ENCODE measurements at regions of chr2 and their contacts with region 1.

Region 1: DNA sequence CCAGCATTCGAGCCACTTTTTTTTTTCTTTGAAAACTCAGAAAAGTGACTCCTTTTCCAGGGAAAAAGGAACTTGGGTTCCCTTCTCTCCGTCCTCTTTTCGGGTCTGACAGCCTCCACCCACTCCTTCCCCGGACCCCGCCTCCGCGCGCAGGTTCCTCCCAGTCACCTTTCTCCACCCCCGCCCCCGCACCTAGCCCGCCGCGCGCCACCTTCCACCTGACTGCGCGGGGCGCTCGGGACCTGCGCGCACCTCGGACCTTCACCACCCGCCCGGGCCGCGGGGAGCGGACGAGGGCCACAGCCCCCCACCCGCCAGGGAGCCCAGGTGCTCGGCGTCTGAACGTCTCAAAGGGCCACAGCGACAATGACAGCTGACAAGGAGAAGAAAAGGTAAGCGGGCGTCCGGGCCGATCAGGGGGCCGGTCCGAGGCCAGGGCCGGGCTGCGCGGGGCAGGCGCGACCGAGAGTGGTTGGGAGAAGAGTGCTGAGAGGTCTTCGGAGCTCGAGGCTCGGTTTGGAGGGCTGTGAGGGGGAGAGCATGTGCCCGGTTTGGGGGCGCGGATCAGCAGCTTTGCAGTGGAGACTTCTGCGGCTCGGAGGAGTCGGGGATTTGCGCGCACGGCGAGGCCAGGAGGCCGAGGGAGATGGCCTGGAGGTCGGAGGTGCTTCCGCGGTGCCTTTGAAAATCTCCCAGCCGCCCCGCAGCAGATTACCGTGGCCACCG is 502 bp downstream of the EPAS1 start:
- DNase-seq: no peak
- ATAC-seq: peak; percentile 70
- H3K4me3 ChIP-seq: peak overlapping the region; percentile 89 to 92
- H3K27ac ChIP-seq: peak overlapping the region; percentile 89; the same call in 1 of the 2 replicates
- H3K4me1 ChIP-seq: peaks cover 25% of the 10 kb centered on the region
- H3K27me3 ChIP-seq: no peaks in the 10 kb centered on the region
- CTCF ChIP-seq: peak; percentile 35

Region 2: DNA sequence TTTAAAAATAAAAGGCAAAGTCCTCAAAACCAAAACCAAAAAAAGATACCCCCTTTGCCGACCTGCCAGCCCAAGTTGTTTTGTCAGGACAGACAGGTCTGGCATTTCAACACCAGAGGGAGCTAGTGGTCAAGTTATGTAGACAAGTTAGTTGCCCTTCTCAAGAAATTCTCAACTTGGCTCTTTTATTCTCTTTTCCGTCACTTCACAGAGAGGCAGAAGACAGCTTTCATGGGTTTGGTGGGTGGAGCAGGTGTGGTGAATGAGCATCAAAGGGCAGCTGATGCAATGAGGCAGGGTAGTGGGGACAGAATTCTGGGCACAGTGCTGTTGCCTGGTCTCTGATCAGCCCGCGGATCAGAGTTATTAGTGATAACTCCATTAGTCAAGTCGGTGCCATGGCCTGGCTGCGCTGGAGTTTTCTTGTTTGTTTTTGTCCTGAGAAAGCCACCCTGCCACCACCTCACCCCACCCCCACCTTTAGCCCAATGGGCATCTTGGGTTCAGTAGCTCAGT is 304.2 kb before region 1 on chr2:
- CTCF ChIA-PET with region 1: interaction called, 16 read pairs
- POLR2A ChIA-PET with region 1: no interaction called
- in situ Hi-C with region 1: no loop called
- intact Hi-C with region 1: no loop called
- DNase-seq: peak; percentile 55
- ATAC-seq: peak; percentile 77; the same call in 1 of the 2 replicates
- H3K4me3 ChIP-seq: no peak overlapping the region
- H3K27ac ChIP-seq: no peak overlapping the region
- H3K4me1 ChIP-seq: peaks cover 13% of the 10 kb centered on the region
- H3K27me3 ChIP-seq: no peaks in the 10 kb centered on the region
- CTCF ChIP-seq: peak; percentile 86

Region 3: GRCh38 chr2:46010925-46011490 is 286.7 kb before region 1 on chr2:
- CTCF ChIA-PET with region 1: no interaction called
- POLR2A ChIA-PET with region 1: no interaction called
- in situ Hi-C with region 1: no loop called
- intact Hi-C with region 1: loop called (anchors 2 kb)
- DNase-seq: no peak
- ATAC-seq: peak; percentile 85
- H3K4me3 ChIP-seq: no peak overlapping the region
- H3K27ac ChIP-seq: no peak overlapping the region
- H3K4me1 ChIP-seq: no peaks in the 10 kb centered on the region
- H3K27me3 ChIP-seq: no peaks in the 10 kb centered on the region
- CTCF ChIP-seq: peak; percentile 71; the same call in 1 of the 2 replicates

Region 4: DNA sequence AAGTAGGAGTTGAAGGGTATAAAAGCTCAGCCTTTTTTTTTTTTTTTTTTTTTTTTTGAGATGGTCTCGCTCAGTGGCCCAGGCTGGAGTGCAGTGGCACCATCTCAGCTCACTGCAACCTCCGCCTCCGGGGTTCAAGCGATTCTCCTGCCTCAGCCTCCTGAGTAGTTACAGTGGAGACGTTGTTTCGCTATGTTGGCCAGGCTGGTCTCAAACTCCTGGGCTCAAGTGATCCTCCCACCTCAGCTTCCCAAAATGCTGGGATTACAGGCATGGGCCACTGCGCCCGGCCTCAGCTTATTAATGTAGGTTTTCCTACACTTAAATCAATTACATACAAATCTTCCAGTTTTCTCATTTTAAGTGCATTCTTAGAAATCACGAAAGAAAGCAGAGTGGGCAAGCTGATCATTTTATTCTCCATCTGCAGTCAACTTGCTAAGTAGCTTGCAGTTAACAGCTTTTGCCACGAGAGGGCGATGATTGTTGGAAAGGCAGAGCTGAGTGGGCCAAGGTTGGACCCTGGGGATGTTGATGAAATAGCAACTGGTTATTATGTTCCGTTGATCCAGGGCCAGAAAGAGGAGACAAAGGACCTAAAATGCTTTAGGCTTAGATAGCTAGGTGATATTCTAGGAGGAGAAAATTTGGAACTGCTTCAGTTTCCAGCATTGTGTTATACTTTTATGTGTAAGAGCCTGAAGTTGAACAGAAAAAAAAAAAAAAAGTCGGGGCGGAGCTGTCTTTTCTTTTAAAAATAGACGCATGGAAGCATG is 234.9 kb before region 1 on chr2:
- CTCF ChIA-PET with region 1: interaction called, 7 read pairs
- POLR2A ChIA-PET with region 1: no interaction called
- in situ Hi-C with region 1: no loop called
- intact Hi-C with region 1: loop called (anchors 5 kb)
- DNase-seq: peak; percentile 73
- ATAC-seq: peak; percentile 84
- H3K4me3 ChIP-seq: no peak overlapping the region
- H3K27ac ChIP-seq: no peak overlapping the region
- H3K4me1 ChIP-seq: peaks cover 2% of the 10 kb centered on the region; the same call in 1 of the 2 replicates
- H3K27me3 ChIP-seq: no peaks in the 10 kb centered on the region
- CTCF ChIP-seq: peak; percentile 91

Region 5: GRCh38 chr2:46364797-46365457 is 67.2 kb after region 1 on chr2:
- CTCF ChIA-PET with region 1: no interaction called
- POLR2A ChIA-PET with region 1: no interaction called
- in situ Hi-C with region 1: no loop called
- intact Hi-C with region 1: loop called (anchors 2 kb)
- DNase-seq: peak; percentile 42
- ATAC-seq: peak; percentile 82
- H3K4me3 ChIP-seq: no peak overlapping the region
- H3K27ac ChIP-seq: no peak overlapping the region
- H3K4me1 ChIP-seq: 0 out of 2 replicates have a peak, but pooled peaks cover 3% of the 10 kb centered on the region
- H3K27me3 ChIP-seq: no peaks in the 10 kb centered on the region
- CTCF ChIP-seq: peak; percentile 80; the same call in 1 of the 2 replicates

Measured in Panc1 (cell line).